Right ventricle myocardium inferior (tissue), 1 donor: ENCODE measurements at regions of chr9 and their contacts with region 1.

Region 1: DNA sequence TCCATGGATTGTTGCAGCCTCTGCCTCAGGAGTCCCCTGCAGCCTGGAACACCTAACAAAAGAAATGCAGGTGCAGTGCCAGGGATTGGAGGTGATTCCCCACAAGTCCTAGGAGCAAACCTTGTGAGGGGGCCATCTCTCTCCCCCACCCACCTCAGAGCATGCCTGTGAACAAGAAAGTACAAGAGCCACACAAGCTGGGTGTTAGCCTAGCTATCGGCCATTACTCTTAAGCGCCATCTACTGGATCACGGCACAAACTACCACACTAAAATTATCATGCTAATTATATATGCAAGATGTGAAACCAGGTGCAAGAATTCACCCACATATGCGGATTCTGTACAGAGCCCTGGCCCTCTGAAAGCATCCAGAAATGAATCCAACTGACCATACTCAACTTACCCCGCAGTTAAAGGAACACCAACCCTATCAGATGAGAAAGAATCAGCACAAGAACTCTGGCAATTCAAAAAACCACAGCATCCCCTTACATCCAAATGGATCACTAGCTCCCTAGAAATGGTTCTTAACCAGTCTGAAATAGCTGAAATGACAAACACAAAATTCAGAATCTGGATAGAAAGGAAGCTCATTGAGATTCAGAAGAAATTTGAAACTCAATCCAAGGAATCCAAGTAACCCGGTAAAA is 16.5 kb upstream of the PRSS3 start:
- DNase-seq: no peak
- ATAC-seq: peak; percentile 60

Region 2: GRCh38 chr9:33737811-33738606 is 40.8 kb before region 1 on chr9:
- intact Hi-C with region 1: loop called (anchors 5 kb)
- DNase-seq: no peak
- ATAC-seq: no peak

Region 3: GRCh38 chr9:33817327-33818166 is 38.7 kb after region 1 on chr9:
- intact Hi-C with region 1: no loop called
- DNase-seq: peak; percentile 84
- ATAC-seq: peak; percentile 37